Activated CD8-positive, alpha-beta T cell treated with anti-CD3 and anti-CD28 coated beads for 36 hours (primary cell): ENCODE measurements at regions of chr5 and their contacts with region 1.

Region 1: GRCh38 chr5:65624571-65625555 is at the starts of genes SHLD3 and TRAPPC13:
- DNase-seq: peak; percentile 88
- ATAC-seq: peak; percentile 80
- H3K4me3 Mint-ChIP-seq: peak within 1 kb of the TSS; percentile 100
- H3K27ac Mint-ChIP-seq: peak within 1 kb of the TSS; percentile 99
- H3K4me1 Mint-ChIP-seq: peaks cover 41% of the 10 kb centered on the region
- H3K27me3 Mint-ChIP-seq: no peaks in the 10 kb centered on the region
- CTCF ChIP-seq: peak; percentile 18
- total RNA-seq, gene SHLD3: 4.1 to 5.2 TPM
- total RNA-seq, gene TRAPPC13: 18.0 to 22.1 TPM

Region 2: DNA sequence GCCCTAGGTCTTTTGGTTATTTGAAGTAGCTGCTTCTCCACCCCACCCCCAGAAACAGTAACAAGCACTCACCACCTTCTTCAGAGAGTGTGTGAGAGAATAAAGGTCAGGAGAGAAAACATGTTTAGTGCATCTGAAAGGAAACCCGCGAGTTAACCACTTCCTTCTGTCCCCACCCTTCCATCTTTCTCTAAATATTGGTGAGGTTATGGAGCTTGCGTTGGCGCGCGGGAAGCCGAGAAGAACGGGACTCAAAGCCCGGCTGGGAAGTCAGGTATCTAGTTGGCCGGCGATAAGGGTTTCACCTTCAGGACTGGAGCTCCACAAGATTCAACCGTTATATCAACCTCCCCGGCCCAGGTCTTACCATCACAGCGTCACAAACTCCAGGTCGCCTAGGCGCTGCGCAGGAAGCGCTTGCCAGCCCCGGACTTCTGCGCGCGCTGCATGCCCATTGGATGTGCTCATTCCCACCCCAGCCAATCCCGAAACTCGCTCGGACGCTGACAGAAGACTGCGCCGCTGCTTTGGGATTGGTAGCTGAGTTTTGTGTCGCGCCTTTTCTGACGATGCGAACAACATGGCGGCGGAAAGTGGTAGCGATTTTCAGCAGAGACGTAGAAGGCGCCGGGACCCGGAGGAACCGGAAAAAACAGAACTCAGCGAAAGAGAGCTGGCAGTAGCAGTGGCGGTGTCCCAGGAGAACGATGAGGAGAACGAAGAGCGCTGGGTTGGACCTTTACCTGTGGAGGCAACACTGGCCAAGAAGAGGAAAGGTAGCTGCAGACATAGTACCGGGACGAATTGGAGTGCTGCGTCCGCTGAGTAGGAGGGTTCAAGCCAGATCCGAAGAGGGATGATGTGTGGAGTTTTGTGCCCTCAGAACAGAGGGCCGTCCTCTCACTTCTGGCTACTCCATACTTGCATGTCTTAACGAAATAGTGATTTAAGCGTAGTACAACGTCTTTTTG is 61.8 kb before region 1 on chr5 and contains the starts of genes CENPK and PPWD1:
- CTCF ChIA-PET with region 1: interaction called, 3 read pairs
- POLR2A ChIA-PET with region 1: interaction called, 22 read pairs
- intact Hi-C with region 1: loop called (anchors 5 kb)
- DNase-seq: peak; percentile 98
- ATAC-seq: peak; percentile 99
- H3K4me3 Mint-ChIP-seq: peak within 1 kb of the TSS; percentile 94
- H3K27ac Mint-ChIP-seq: peak within 1 kb of the TSS; percentile 98
- H3K4me1 Mint-ChIP-seq: peaks cover 40% of the 10 kb centered on the region
- H3K27me3 Mint-ChIP-seq: no peaks in the 10 kb centered on the region
- CTCF ChIP-seq: no peak
- total RNA-seq, gene CENPK: 70.9 to 79.2 TPM
- total RNA-seq, gene PPWD1: 33.8 to 37.8 TPM

Region 3: DNA sequence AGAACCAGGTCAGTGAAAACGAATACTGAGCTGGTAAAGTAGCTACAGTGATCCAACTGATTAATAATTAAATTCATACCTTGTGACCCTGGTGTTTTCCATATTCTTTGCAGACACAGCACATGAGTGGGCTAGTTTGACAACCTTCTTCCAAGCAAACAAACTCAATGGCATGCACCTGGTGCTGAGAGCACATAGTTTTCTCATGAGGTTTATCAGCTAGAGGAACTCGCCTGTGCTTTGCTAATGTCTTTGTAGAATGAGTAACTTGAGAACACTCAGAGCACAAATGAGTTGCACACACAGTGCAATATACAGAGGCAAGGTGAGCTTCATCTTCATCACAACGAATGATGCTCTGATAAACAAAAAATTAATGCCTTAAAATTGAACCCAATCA is 13.3 kb before region 1 on chr5:
- CTCF ChIA-PET with region 1: interaction called, 3 read pairs
- POLR2A ChIA-PET with region 1: interaction called, 11 read pairs
- intact Hi-C with region 1: no loop called
- DNase-seq: no peak
- ATAC-seq: no peak
- H3K4me3 Mint-ChIP-seq: no peak overlapping the region
- H3K27ac Mint-ChIP-seq: no peak overlapping the region
- H3K4me1 Mint-ChIP-seq: no peaks in the 10 kb centered on the region
- H3K27me3 Mint-ChIP-seq: no peaks in the 10 kb centered on the region
- CTCF ChIP-seq: no peak

Region 4: GRCh38 chr5:65742565-65743231 is 117.8 kb after region 1 on chr5:
- CTCF ChIA-PET with region 1: no interaction called
- POLR2A ChIA-PET with region 1: no interaction called
- intact Hi-C with region 1: no loop called
- DNase-seq: no peak
- ATAC-seq: peak; percentile 87
- H3K4me3 Mint-ChIP-seq: no peak overlapping the region
- H3K27ac Mint-ChIP-seq: no peak overlapping the region
- H3K4me1 Mint-ChIP-seq: peaks cover 14% of the 10 kb centered on the region
- H3K27me3 Mint-ChIP-seq: no peaks in the 10 kb centered on the region
- CTCF ChIP-seq: peak; percentile 76

Region 5: GRCh38 chr5:65774346-65774745 is 149.5 kb after region 1 on chr5:
- CTCF ChIA-PET with region 1: no interaction called
- POLR2A ChIA-PET with region 1: no interaction called
- intact Hi-C with region 1: no loop called
- DNase-seq: peak; percentile 17
- ATAC-seq: peak; percentile 91
- H3K4me3 Mint-ChIP-seq: no peak overlapping the region
- H3K27ac Mint-ChIP-seq: peak overlapping the region; percentile 12
- H3K4me1 Mint-ChIP-seq: peaks cover 24% of the 10 kb centered on the region
- H3K27me3 Mint-ChIP-seq: no peaks in the 10 kb centered on the region
- CTCF ChIP-seq: no peak

Region 6: GRCh38 chr5:66144074-66144833 is 519.4 kb after region 1 on chr5 and contains the start of gene SREK1:
- CTCF ChIA-PET with region 1: no interaction called
- POLR2A ChIA-PET with region 1: no interaction called
- intact Hi-C with region 1: loop called (anchors 10 kb)
- DNase-seq: peak; percentile 93
- ATAC-seq: peak; percentile 90
- H3K4me3 Mint-ChIP-seq: peak within 1 kb of the TSS; percentile 89
- H3K27ac Mint-ChIP-seq: peak within 1 kb of the TSS; percentile 99
- H3K4me1 Mint-ChIP-seq: peaks cover 42% of the 10 kb centered on the region
- H3K27me3 Mint-ChIP-seq: no peaks in the 10 kb centered on the region
- CTCF ChIP-seq: no peak
- total RNA-seq, gene SREK1: 53.9 to 60.2 TPM